ENCODE measurements at regions of chr7 and their contacts with region 1.

Region 1: GRCh38 chr7:36366718-36367560 is 22.7 kb upstream of the ANLN start:
- H3K4me3 ChIP-seq: peak overlapping the region; percentile 84
- H3K27ac ChIP-seq: peak overlapping the region; percentile 80
- H3K4me1 ChIP-seq: peaks cover 5% of the 10 kb centered on the region; the same call in 1 of the 2 replicates
- CTCF ChIP-seq: peak; percentile 95

Region 2: GRCh38 chr7:36348256-36348655 is 18.7 kb before region 1 on chr7:
- CTCF ChIA-PET with region 1: interaction called, 10 read pairs
- POLR2A ChIA-PET with region 1: no interaction called
- H3K4me3 ChIP-seq: no peak overlapping the region
- H3K27ac ChIP-seq: no peak overlapping the region
- H3K4me1 ChIP-seq: no peaks in the 10 kb centered on the region; the same call in none of the 2 replicates
- CTCF ChIP-seq: no peak

Region 3: DNA sequence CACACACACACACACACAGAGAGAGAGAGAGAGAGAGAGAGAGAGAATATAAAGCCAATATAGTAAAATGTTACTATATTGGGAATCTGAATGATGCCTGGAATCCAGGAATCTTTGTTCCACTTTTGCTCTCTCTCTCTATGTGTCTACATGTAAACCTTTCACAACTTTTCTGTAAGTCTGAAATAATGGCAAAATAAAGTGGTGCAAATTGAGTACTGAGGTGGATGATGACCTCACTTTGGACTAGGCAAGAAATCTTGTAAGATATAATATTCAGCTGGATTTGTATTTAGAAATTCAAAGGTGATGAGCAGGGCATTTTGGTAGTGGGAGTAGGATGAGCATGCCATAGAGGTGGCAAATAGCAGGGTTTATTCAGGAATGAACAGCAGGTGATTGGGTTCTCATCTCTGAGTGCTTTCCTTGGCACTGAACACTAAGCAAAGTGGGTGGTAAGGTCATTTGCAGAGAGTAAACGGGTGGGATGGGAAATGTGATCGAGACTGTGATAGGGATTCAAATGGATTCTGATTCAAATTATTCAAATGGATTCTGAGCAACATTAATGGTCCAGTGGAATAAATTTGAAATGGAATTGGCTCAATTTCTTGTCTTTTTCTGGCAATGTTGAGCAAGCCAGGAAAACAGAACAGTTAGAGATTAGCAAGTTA is 13.0 kb after region 1 on chr7:
- CTCF ChIA-PET with region 1: interaction called, 10 read pairs
- POLR2A ChIA-PET with region 1: no interaction called
- H3K4me3 ChIP-seq: no peak overlapping the region
- H3K27ac ChIP-seq: no peak overlapping the region
- H3K4me1 ChIP-seq: no peaks in the 10 kb centered on the region
- CTCF ChIP-seq: no peak

Region 4: GRCh38 chr7:36389371-36390198 is 22.6 kb after region 1 on chr7 and contains the start of gene ANLN:
- CTCF ChIA-PET with region 1: interaction called, 26 read pairs
- POLR2A ChIA-PET with region 1: interaction called, 15 read pairs
- H3K4me3 ChIP-seq: peak within 1 kb of the TSS; percentile 97
- H3K27ac ChIP-seq: peak within 1 kb of the TSS; percentile 88
- H3K4me1 ChIP-seq: 0 out of 2 replicates have a peak, but pooled peaks cover 11% of the 10 kb centered on the region
- CTCF ChIP-seq: no peak

Region 5: GRCh38 chr7:37128327-37129034 is 761.5 kb after region 1 on chr7:
- CTCF ChIA-PET with region 1: no interaction called
- POLR2A ChIA-PET with region 1: no interaction called
- H3K4me3 ChIP-seq: no peak overlapping the region
- H3K27ac ChIP-seq: no peak overlapping the region
- H3K4me1 ChIP-seq: no peaks in the 10 kb centered on the region
- CTCF ChIP-seq: no peak